Dendritic cell treated with granulocyte-macrophage colony-stimulating factor and Interleukin-4, amounts not matched to agents 40 ng/mL and 50 ng/mL, for 4 days (primary cell): ENCODE measurements at regions of chr19 and their contacts with region 1.

Region 1: GRCh38 chr19:4669723-4670480 is at the start of gene MYDGF:
- H3K4me3 Mint-ChIP-seq: peak within 1 kb of the TSS; percentile 93
- H3K27ac Mint-ChIP-seq: peak within 1 kb of the TSS; percentile 90
- H3K4me1 Mint-ChIP-seq: peaks cover 40% of the 10 kb centered on the region
- H3K27me3 Mint-ChIP-seq: no peaks in the 10 kb centered on the region

Region 2: DNA sequence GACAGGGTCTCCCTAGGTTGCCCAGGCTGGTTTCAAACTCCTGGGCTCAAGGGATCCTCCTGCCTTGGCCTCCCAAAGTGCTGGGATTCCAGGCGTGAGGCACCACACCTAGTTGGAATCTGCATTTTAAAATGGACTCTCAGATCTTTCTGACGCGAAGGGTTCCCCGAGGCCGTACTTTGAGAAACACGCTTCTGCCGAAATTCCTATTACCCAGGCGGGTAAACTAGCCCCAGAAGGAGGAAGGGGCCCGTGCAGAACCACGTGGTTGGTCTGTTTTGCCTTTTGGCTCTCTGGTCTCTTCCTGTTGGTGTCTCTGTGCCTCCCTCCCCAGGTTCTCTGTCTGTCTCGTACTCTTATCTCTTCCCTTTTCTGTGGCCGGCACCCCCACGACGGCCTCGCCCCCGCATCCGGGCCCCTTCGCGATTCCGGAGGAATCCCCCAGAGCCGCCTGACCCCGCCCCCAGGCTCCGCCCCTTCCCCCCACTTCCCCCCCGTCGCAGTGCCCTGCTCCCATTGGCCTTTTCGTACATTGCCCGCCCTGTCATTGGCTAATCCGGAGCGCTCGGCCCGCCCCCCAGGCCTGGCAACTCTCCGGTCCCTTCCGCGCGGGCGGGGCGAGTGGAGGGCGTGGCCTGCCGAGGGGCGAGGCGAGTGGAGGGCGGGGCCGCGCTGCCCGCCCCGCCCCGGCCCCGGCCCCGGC is 30.9 kb before region 1 on chr19 and contains the start of gene TNFAIP8L1:
- intact Hi-C with region 1: loop called (anchors 2 kb)
- H3K4me3 Mint-ChIP-seq: peak within 1 kb of the TSS; percentile 99
- H3K27ac Mint-ChIP-seq: peak within 1 kb of the TSS; percentile 96
- H3K4me1 Mint-ChIP-seq: peaks cover 49% of the 10 kb centered on the region
- H3K27me3 Mint-ChIP-seq: no peaks in the 10 kb centered on the region